ENCODE measurements at regions of chr15 and their contacts with region 1.

Region 1: GRCh38 chr15:60507596-60508424 is 28.9 kb upstream of the ICE2 start:
- DNase-seq: peak; percentile 80
- H3K4me3 ChIP-seq: no peak overlapping the region
- H3K27ac ChIP-seq: no peak overlapping the region
- H3K4me1 ChIP-seq: no peaks in the 10 kb centered on the region
- H3K27me3 ChIP-seq: no peaks in the 10 kb centered on the region
- CTCF ChIP-seq: peak; percentile 78 to 87
- POLR2A ChIP-seq: no peak

Region 2: GRCh38 chr15:60362321-60363086 is 145.3 kb before region 1 on chr15:
- CTCF ChIA-PET with region 1: interaction called, 4 read pairs
- POLR2A ChIA-PET with region 1: no interaction called
- dilution Hi-C with region 1: no loop called
- intact Hi-C with region 1: loop called (anchors 5 kb)
- DNase-seq: no peak
- H3K4me3 ChIP-seq: no peak overlapping the region
- H3K27ac ChIP-seq: peak overlapping the region; percentile 23
- H3K4me1 ChIP-seq: peaks cover 46% of the 10 kb centered on the region
- H3K27me3 ChIP-seq: no peaks in the 10 kb centered on the region
- CTCF ChIP-seq: no peak
- POLR2A ChIP-seq: no peak

Region 3: DNA sequence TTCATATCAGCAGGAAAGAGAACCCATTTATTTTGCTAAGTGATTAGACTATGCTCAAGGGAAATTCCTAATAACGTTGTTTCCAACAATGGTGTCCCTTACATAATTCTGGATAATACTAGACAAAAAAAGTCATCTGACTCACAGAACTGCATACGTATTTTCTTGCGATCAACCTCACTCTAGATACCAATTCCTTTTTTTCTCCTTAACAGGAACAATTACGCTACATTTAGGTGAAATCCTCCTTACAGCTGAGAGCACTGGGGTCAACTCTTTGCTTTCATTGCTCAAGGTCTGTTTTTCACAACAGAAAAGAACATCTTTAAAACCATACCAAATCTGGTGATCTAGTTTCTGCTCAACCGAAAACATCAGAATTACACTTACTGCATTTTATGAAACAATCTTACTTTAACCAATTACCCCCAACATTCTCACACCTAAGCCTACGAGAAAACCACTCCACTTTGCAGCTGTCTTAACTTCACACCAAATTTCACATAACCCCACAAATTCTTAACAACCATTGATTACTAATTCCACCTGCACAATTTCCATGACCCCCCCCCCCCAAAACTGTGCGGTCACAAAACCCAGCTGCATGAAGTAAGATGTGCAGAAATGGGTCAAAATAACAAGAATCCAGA is 32.3 kb after region 1 on chr15:
- CTCF ChIA-PET with region 1: no interaction called
- POLR2A ChIA-PET with region 1: no interaction called
- dilution Hi-C with region 1: no loop called
- intact Hi-C with region 1: no loop called
- DNase-seq: peak; percentile 51
- H3K4me3 ChIP-seq: no peak overlapping the region
- H3K27ac ChIP-seq: no peak overlapping the region
- H3K4me1 ChIP-seq: peaks cover 3% of the 10 kb centered on the region
- H3K27me3 ChIP-seq: no peaks in the 10 kb centered on the region
- CTCF ChIP-seq: no peak
- POLR2A ChIP-seq: no peak

Region 4: GRCh38 chr15:60932051-60932915 is 424.5 kb after region 1 on chr15:
- CTCF ChIA-PET with region 1: no interaction called
- POLR2A ChIA-PET with region 1: no interaction called
- dilution Hi-C with region 1: no loop called
- intact Hi-C with region 1: no loop called
- DNase-seq: no peak
- H3K4me3 ChIP-seq: no peak overlapping the region
- H3K27ac ChIP-seq: no peak overlapping the region
- H3K4me1 ChIP-seq: no peaks in the 10 kb centered on the region
- H3K27me3 ChIP-seq: peaks cover 0 to 3% of the 10 kb centered on the region in 2 experiments
- CTCF ChIP-seq: no peak
- POLR2A ChIP-seq: no peak

Region 5: GRCh38 chr15:61051569-61052031 is 543.8 kb after region 1 on chr15:
- CTCF ChIA-PET with region 1: interaction called, 16 read pairs
- POLR2A ChIA-PET with region 1: no interaction called
- dilution Hi-C with region 1: no loop called
- intact Hi-C with region 1: loop called (anchors 2 kb)
- DNase-seq: peak; percentile 70
- H3K4me3 ChIP-seq: no peak overlapping the region
- H3K27ac ChIP-seq: no peak overlapping the region
- H3K4me1 ChIP-seq: no peaks in the 10 kb centered on the region
- H3K27me3 ChIP-seq: no peaks in the 10 kb centered on the region
- CTCF ChIP-seq: peak; percentile 68 to 78
- POLR2A ChIP-seq: no peak

Region 6: GRCh38 chr15:61327019-61327631 is 819.3 kb after region 1 on chr15:
- CTCF ChIA-PET with region 1: no interaction called
- POLR2A ChIA-PET with region 1: no interaction called
- dilution Hi-C with region 1: no loop called
- intact Hi-C with region 1: no loop called
- DNase-seq: no peak
- H3K4me3 ChIP-seq: no peak overlapping the region
- H3K27ac ChIP-seq: no peak overlapping the region
- H3K4me1 ChIP-seq: no peaks in the 10 kb centered on the region
- H3K27me3 ChIP-seq: no peaks in the 10 kb centered on the region
- CTCF ChIP-seq: no peak
- POLR2A ChIP-seq: no peak

Measured in endothelial cell of umbilical vein (primary cell).